HepG2 (cell line): ENCODE measurements at regions of chr16 and their contacts with region 1.

Region 1: DNA sequence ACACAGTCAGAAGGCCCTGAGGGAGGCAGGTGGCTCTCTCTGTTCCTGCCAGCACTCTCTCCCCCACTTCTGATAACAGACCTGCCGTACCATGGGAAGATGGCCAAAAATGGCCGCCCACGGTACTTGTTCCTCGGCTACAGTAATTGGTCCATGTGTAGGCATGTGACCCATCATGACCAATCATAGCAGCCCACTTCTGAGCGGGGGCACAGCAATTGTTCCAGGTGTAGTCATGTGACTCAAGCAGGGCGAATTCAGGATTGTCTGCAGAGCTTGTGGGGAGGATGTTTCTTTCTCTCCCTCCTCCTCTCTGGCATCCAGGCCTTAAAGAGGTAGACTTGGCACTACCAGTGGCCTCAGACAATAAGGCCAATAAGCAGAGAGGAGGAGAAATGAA is 250.4 kb downstream of the MRTFB start:
- DNase-seq: no peak
- ATAC-seq: no peak
- H3K4me3 ChIP-seq: no peak overlapping the region
- H3K27ac ChIP-seq: no peak overlapping the region
- H3K4me1 ChIP-seq: peaks cover 33% of the 10 kb centered on the region
- H3K27me3 ChIP-seq: no peaks in the 10 kb centered on the region
- CTCF ChIP-seq: no peak
- EP300 ChIP-seq: no peak
- POLR2A ChIP-seq: no peak
- RAD21 ChIP-seq: no peak

Region 2: DNA sequence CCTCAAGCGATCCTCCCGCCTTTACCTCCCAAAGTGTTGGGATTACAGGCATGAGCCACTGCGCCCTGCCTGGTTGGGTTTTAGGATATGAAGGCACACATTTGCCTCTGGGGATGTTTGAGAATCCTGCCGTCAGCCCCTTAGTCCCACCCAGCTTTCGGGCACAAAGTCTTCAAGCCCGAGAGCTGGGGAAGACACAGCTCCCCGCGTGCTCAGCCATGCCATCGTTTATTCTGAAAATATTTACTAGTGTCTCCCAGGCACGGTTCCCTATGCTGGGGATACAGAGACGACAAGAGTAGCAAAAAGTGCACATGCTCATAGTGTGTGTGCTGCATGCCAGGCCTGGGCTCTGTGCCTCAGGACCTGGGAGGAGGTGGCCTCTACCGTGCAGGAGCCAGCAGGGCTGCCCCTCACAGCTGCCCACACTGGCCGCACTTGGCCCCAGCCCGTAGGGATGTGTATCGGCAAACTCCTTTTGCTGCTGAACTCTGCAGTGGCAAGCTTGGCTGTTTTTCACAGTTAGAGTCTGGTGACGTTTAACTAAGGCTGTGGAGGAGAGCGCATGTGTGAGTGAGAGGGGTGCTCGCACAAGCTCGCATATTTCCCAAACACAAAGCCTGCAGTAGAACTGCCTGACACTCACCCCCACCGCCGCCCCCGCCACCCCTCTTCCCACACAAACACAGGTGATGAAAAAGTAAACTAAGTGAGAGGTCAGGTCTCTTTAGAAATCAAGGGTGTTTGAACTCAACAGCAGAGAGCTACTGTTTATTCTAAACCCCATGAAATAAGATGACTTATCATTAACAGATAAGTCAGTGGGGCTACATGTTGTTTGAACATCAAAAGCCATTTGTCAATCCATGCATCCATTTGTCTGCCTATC is 16.0 kb after region 1 on chr16:
- CTCF ChIA-PET with region 1: no interaction called
- POLR2A ChIA-PET with region 1: interaction called, 10 read pairs
- in situ Hi-C with region 1: no loop called
- intact Hi-C with region 1: no loop called
- DNase-seq: peak; percentile 73
- ATAC-seq: peak; percentile 90
- H3K4me3 ChIP-seq: peak overlapping the region; percentile 28 to 66 (median 32); a peak in 4 of 6 replicates
- H3K27ac ChIP-seq: peak overlapping the region; percentile 69
- H3K4me1 ChIP-seq: peaks cover 47% of the 10 kb centered on the region
- H3K27me3 ChIP-seq: no peaks in the 10 kb centered on the region; a peak in 1 of 5 replicates
- CTCF ChIP-seq: peak; percentile 29
- EP300 ChIP-seq: peak in 1 of 2 experiments; percentile 77; a peak in 2 of 4 replicates
- POLR2A ChIP-seq: peak; percentile 34 to 73; a peak in 3 of 4 replicates
- RAD21 ChIP-seq: no peak